Posterior vena cava (tissue), 2 donors: ENCODE measurements at regions of chr14 and their contacts with region 1.

Region 1: GRCh38 chr14:68854421-68854820 is 61.6 kb upstream of the ZFP36L1 start:
- DNase-seq: no peak

Region 2: GRCh38 chr14:67766172-67766680 is 1088.2 kb before region 1 on chr14:
- intact Hi-C with region 1: loop called in 1 of 2 experiments (anchors 5 kb)
- DNase-seq: no peak